IMR-90 (cell line): ENCODE measurements at regions of chr9 and their contacts with region 1.

Region 1: GRCh38 chr9:115944166-115944948 is 209.2 kb upstream of the PAPPA start:
- DNase-seq: peak; percentile 100
- ATAC-seq: peak; percentile 87
- H3K4me3 ChIP-seq: no peak overlapping the region
- H3K27ac ChIP-seq: peak overlapping the region; percentile 96
- H3K4me1 ChIP-seq: peaks cover 25% of the 10 kb centered on the region
- H3K27me3 ChIP-seq: no peaks in the 10 kb centered on the region
- CTCF ChIP-seq: no peak
- POLR2A ChIP-seq: peak; percentile 65
- RAD21 ChIP-seq: peak; percentile 32; the same call in 1 of the 2 replicates

Region 2: GRCh38 chr9:115672477-115673316 is 271.7 kb before region 1 on chr9:
- CTCF ChIA-PET with region 1: no interaction called
- POLR2A ChIA-PET with region 1: interaction called, 4 read pairs
- dilution Hi-C with region 1: no loop called
- in situ Hi-C with region 1: no loop called
- intact Hi-C with region 1: loop called (anchors 1 kb)
- DNase-seq: peak; percentile 99
- ATAC-seq: peak; percentile 74
- H3K4me3 ChIP-seq: peak overlapping the region; percentile 10; the same call in 1 of the 2 replicates
- H3K27ac ChIP-seq: peak overlapping the region; percentile 99
- H3K4me1 ChIP-seq: peaks cover 35% of the 10 kb centered on the region
- H3K27me3 ChIP-seq: no peaks in the 10 kb centered on the region
- CTCF ChIP-seq: no peak
- POLR2A ChIP-seq: peak; percentile 73
- RAD21 ChIP-seq: peak; percentile 32; the same call in 1 of the 2 replicates

Region 3: GRCh38 chr9:115757461-115757860 is 186.9 kb before region 1 on chr9:
- CTCF ChIA-PET with region 1: no interaction called
- POLR2A ChIA-PET with region 1: no interaction called
- dilution Hi-C with region 1: no loop called
- in situ Hi-C with region 1: no loop called
- intact Hi-C with region 1: loop called (anchors 5 kb)
- DNase-seq: no peak
- ATAC-seq: no peak
- H3K4me3 ChIP-seq: no peak overlapping the region
- H3K27ac ChIP-seq: no peak overlapping the region
- H3K4me1 ChIP-seq: no peaks in the 10 kb centered on the region
- H3K27me3 ChIP-seq: no peaks in the 10 kb centered on the region
- CTCF ChIP-seq: no peak
- POLR2A ChIP-seq: no peak
- RAD21 ChIP-seq: no peak

Region 4: DNA sequence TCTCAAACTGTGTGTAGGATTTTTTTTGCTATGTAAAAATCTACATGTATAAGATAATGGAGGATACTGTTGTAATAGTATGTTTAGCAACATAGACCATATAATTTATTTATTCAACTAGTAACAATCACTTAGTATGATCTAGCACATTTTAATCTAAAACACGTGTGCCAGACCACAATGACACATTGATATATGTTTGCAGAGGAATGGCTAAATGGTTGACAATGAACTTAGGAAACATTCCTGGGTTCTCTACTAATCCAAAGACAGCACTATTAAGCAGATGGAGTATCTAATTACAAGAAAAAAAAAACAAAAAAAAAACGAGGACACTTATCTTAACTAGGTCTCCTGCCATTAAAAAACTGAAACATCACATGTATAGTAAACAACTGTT is 52.4 kb before region 1 on chr9:
- CTCF ChIA-PET with region 1: no interaction called
- POLR2A ChIA-PET with region 1: no interaction called
- dilution Hi-C with region 1: no loop called
- in situ Hi-C with region 1: no loop called
- intact Hi-C with region 1: loop called (anchors 2 kb)
- DNase-seq: peak; percentile 86
- ATAC-seq: peak; percentile 59
- H3K4me3 ChIP-seq: no peak overlapping the region
- H3K27ac ChIP-seq: no peak overlapping the region; the same call in 1 of the 2 replicates
- H3K4me1 ChIP-seq: no peaks in the 10 kb centered on the region
- H3K27me3 ChIP-seq: no peaks in the 10 kb centered on the region
- CTCF ChIP-seq: no peak
- POLR2A ChIP-seq: no peak
- RAD21 ChIP-seq: no peak

Region 5: DNA sequence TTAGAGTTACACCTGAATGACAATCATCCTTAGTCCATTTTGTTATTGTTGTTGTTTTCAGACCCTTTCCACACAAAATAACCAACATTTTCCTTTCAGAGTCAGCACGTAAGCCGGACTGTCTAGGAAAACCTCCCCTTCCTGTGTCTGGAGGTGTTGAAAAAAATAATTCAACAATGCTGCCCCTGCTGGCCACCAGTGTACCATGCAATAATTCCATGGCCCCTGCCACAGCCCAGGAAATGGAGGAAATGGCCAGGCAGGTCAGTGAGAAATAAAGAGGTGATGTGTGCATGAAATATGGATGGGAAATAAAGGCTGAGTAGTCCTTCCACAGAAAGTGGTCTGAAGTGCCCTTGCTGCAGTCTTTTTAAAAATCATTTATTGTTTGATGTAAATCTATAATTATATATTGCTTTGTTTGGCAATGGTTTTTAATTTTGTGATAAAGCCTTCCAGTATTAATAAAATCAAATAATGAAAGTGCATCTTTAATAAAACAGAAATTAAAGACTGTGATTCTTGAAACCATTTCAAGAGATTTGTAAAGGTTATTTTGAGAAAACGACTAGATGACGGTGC is 56.5 kb after region 1 on chr9:
- CTCF ChIA-PET with region 1: no interaction called
- POLR2A ChIA-PET with region 1: no interaction called
- dilution Hi-C with region 1: no loop called
- in situ Hi-C with region 1: loop called (anchors 10 kb)
- intact Hi-C with region 1: loop called (anchors 2 kb)
- DNase-seq: no peak
- ATAC-seq: no peak
- H3K4me3 ChIP-seq: no peak overlapping the region
- H3K27ac ChIP-seq: no peak overlapping the region
- H3K4me1 ChIP-seq: peaks cover 18% of the 10 kb centered on the region
- H3K27me3 ChIP-seq: no peaks in the 10 kb centered on the region
- CTCF ChIP-seq: peak; percentile 34
- POLR2A ChIP-seq: no peak
- RAD21 ChIP-seq: no peak; the same call in 1 of the 2 replicates